Breast epithelium (tissue), 4 donors: ENCODE measurements at regions of chr15 and their contacts with region 1.

Region 1: GRCh38 chr15:27623560-27624305 is 475.4 kb downstream of the OCA2 start:
- DNase-seq: no peak
- H3K4me3 ChIP-seq: no peak overlapping the region
- H3K27ac ChIP-seq: no peak overlapping the region
- H3K4me1 ChIP-seq: no peaks in the 10 kb centered on the region
- H3K27me3 ChIP-seq: no peaks in the 10 kb centered on the region
- CTCF ChIP-seq: no peak
- POLR2A ChIP-seq: no peak

Region 2: DNA sequence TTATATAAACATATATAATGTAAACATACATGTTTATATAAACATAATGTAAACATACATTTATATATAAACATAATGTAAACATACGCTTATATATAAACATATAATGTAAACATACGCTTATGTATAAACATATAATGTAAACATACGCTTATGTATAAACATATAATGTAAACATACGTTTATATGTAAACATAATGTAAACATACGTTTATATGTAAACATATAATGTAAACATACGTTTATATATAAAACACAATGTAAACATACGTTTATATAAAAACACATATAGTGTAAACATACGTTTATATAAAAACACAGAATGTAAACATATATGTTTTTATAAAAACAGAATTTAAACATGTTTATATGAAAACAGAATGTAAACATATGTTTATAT is 315.2 kb before region 1 on chr15:
- intact Hi-C with region 1: loop called (anchors 5 kb)
- DNase-seq: no peak
- H3K4me3 ChIP-seq: no peak overlapping the region
- H3K27ac ChIP-seq: no peak overlapping the region
- H3K4me1 ChIP-seq: no peaks in the 10 kb centered on the region
- H3K27me3 ChIP-seq: no peaks in the 10 kb centered on the region
- CTCF ChIP-seq: no peak
- POLR2A ChIP-seq: no peak